ENCODE measurements at regions of chr11 and their contacts with region 1.

Region 1: DNA sequence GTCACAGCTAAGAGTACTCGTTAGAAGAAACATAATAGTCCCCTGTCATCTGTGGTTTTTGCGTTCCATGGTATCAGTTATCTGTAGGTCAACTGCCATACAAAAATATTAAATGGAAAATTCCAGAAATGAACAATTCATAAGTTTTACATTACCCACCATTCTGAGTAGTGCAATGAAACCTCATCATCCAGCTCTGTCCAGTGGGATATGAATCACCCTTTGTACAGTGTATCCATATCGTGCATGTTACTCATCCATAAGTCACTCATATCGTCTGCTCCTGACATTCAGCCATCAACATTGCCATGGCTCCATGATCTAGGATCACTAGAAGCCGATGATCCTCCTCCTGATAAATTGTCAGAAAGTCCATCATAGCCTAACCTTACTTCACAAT is 174.9 kb upstream of the C11orf87 start:
- DNase-seq: no peak
- H3K4me3 ChIP-seq: no peak overlapping the region
- H3K27ac ChIP-seq: no peak overlapping the region
- H3K4me1 ChIP-seq: no peaks in the 10 kb centered on the region
- H3K27me3 ChIP-seq: no peaks in the 10 kb centered on the region
- CTCF ChIP-seq: no peak

Region 2: GRCh38 chr11:110158317-110159200 is 911.5 kb after region 1 on chr11:
- CTCF ChIA-PET with region 1: no interaction called
- POLR2A ChIA-PET with region 1: interaction called, 12 read pairs
- intact Hi-C with region 1: no loop called
- DNase-seq: no peak
- H3K4me3 ChIP-seq: no peak overlapping the region
- H3K27ac ChIP-seq: no peak overlapping the region
- H3K4me1 ChIP-seq: peaks cover 5% of the 10 kb centered on the region
- H3K27me3 ChIP-seq: no peaks in the 10 kb centered on the region
- CTCF ChIP-seq: no peak

Measured in A673 (cell line).